B cell (primary cell): ENCODE measurements at regions of chr4 and their contacts with region 1.

Region 1: GRCh38 chr4:48085821-48086607 is 48.0 kb downstream of the TXK start:
- DNase-seq: no peak
- ATAC-seq: no peak
- H3K4me3 ChIP-seq: no peak overlapping the region
- H3K4me3 Mint-ChIP-seq: no peak overlapping the region
- H3K27ac ChIP-seq: no peak overlapping the region
- H3K27ac Mint-ChIP-seq: no peak overlapping the region
- H3K4me1 ChIP-seq: no peaks in the 10 kb centered on the region
- H3K4me1 Mint-ChIP-seq: no peaks in the 10 kb centered on the region
- H3K27me3 ChIP-seq: no peaks in the 10 kb centered on the region
- H3K27me3 Mint-ChIP-seq: peaks cover 15% of the 10 kb centered on the region
- CTCF ChIP-seq: no peak

Region 2: DNA sequence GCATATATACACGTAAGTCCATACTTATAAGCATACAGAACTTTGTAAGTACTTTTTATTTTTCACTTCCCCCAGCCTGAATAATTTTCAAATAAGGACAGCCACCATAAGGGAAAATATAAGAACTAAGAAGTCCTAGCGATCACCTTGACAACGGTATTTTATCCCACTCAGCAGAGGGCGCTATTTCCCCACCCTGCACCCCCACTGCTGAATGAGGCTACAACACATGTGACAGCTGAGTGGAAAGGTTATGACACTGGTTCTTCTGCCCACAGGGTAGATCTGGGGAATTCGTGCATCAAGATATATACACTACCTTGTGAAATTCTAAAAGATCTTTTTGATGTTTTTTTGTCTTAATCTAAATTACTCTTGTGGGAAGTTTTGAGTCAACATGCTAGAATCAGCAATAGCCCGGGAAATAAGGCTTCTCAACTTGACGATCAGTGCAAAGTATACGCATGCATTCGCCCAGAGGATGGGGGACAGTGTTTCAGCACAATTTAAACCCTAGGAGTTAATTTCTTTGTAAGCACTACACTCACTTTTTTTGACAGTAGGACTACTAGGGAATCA is 399.6 kb before region 1 on chr4:
- CTCF ChIA-PET with region 1: interaction called, 4 read pairs
- POLR2A ChIA-PET with region 1: no interaction called
- intact Hi-C with region 1: loop called (anchors 5 kb)
- DNase-seq: peak; percentile 64
- ATAC-seq: peak; percentile 36
- H3K4me3 ChIP-seq: no peak overlapping the region
- H3K4me3 Mint-ChIP-seq: no peak overlapping the region
- H3K27ac ChIP-seq: no peak overlapping the region
- H3K27ac Mint-ChIP-seq: no peak overlapping the region
- H3K4me1 ChIP-seq: no peaks in the 10 kb centered on the region
- H3K4me1 Mint-ChIP-seq: no peaks in the 10 kb centered on the region
- H3K27me3 ChIP-seq: peaks cover 0 to 1% (median 0%) of the 10 kb centered on the region in 4 experiments
- H3K27me3 Mint-ChIP-seq: peaks cover 18% of the 10 kb centered on the region
- CTCF ChIP-seq: peak; percentile 76

Region 3: DNA sequence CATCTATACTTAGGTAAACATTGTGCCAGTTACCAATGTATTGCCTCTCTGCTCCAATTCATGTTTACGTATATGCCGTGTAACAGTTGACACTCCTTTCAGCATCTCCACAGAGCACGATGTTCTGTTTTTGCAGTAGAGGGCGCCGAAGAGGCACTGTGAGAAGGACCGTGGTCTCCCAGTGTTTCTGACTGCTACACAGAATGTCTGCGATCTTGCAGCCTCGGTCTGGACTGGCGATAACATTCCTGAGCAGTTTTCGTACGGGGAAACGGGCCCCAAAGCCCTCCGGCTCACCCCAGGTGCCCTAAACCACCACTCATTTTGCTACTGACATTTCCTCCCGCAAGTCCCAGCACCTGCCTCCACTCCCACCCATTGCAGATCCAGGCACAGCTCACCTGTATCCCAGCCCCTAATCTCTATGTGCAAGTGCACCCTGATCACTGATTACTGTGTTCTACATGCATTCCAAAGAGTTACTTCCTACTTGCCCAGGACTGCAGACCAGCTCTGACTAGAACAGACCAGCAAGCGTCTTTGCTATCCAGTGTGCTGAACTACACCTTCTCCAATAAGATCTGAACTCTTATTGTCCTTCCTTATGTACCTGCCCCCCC is 159.3 kb before region 1 on chr4:
- CTCF ChIA-PET with region 1: interaction called, 4 read pairs
- POLR2A ChIA-PET with region 1: no interaction called
- intact Hi-C with region 1: loop called (anchors 1 kb)
- DNase-seq: peak; percentile 61
- ATAC-seq: peak; percentile 77
- H3K4me3 ChIP-seq: no peak overlapping the region
- H3K4me3 Mint-ChIP-seq: peak overlapping the region; percentile 40
- H3K27ac ChIP-seq: no peak overlapping the region
- H3K27ac Mint-ChIP-seq: no peak overlapping the region
- H3K4me1 ChIP-seq: peaks cover 6 to 14% of the 10 kb centered on the region in 2 donors
- H3K4me1 Mint-ChIP-seq: peaks cover 22% of the 10 kb centered on the region
- H3K27me3 ChIP-seq: peaks cover 0 to 6% (median 1%) of the 10 kb centered on the region in 4 experiments
- H3K27me3 Mint-ChIP-seq: peaks cover 13% of the 10 kb centered on the region
- CTCF ChIP-seq: peak; percentile 77

Region 4: DNA sequence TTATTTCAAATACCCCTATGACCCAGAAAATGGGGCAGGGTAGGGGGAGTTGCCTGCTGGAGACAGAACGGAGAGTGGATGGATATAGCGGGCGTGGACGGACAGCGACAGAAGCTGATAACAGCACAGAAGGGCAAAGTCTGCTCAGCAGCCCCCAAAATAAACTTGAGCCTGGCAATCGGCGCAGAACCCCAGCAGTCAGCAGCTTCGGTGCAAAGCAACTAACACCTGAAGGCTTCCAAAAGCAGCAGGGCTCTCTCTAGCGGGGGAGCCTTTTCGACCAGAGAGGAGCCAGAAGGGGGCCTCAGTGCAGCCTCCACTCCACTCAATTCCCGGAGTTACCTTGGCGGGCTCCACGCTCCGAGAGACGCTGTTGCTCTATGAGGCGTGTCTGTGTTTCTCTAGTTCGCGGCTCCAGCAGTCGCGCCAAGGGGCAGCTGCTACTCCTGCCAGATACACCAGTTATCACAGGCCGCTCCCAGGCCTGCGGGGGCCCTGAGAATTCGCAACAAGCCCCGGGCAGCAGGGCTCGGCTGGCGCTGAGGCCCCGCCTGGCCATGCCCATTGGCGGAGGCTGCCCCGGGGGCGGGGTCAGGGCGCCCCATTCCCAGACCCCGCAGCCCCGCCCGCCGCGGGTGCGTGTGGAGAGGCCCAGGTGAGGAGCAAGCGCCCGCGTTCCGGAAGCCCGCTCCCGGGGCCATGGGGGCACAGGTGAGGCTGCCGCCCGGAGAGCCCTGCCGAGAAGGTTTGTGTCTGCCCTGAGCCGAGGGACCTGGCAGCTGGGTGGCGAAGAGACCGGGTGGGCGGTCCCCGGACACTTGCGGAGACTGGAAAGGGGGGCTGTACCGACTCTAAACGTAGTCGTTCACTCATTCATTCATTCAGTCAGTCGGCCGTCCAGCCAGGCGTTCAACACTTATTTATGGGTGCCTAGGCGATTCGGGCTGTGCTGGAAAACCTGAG is 69.6 kb before region 1 on chr4 and contains the starts of genes CNGA1 and NIPAL1:
- CTCF ChIA-PET with region 1: interaction called, 17 read pairs
- POLR2A ChIA-PET with region 1: no interaction called
- intact Hi-C with region 1: loop called (anchors 5 kb)
- DNase-seq: peak; percentile 71
- ATAC-seq: peak; percentile 92
- H3K4me3 ChIP-seq: peak within 1 kb of the TSS; percentile 41 to 80 (median 66)
- H3K4me3 Mint-ChIP-seq: peak within 1 kb of the TSS; percentile 89
- H3K27ac ChIP-seq: no peak within 1 kb of the TSS
- H3K27ac Mint-ChIP-seq: peak within 1 kb of the TSS; percentile 50
- H3K4me1 ChIP-seq: peaks cover 15 to 18% of the 10 kb centered on the region in 2 donors
- H3K4me1 Mint-ChIP-seq: peaks cover 15% of the 10 kb centered on the region
- H3K27me3 ChIP-seq: peaks cover 2 to 49% (median 28%) of the 10 kb centered on the region in 4 experiments
- H3K27me3 Mint-ChIP-seq: peaks cover 45% of the 10 kb centered on the region
- CTCF ChIP-seq: peak; percentile 15
- total RNA-seq, gene CNGA1: not detected in 2 replicates
- total RNA-seq, gene NIPAL1: 1.1 TPM in 1 of 2 replicates, not detected in the other

Region 5: GRCh38 chr4:48047421-48047844 is 38.6 kb before region 1 on chr4:
- CTCF ChIA-PET with region 1: interaction called, 66 read pairs
- POLR2A ChIA-PET with region 1: no interaction called
- intact Hi-C with region 1: no loop called
- DNase-seq: peak; percentile 87
- ATAC-seq: peak; percentile 95
- H3K4me3 ChIP-seq: peak overlapping the region in 2 of 5 experiments; percentile 8 to 31
- H3K4me3 Mint-ChIP-seq: peak overlapping the region; percentile 57
- H3K27ac ChIP-seq: no peak overlapping the region
- H3K27ac Mint-ChIP-seq: peak overlapping the region; percentile 17
- H3K4me1 ChIP-seq: peaks cover 58 to 60% of the 10 kb centered on the region in 2 donors
- H3K4me1 Mint-ChIP-seq: peaks cover 59% of the 10 kb centered on the region
- H3K27me3 ChIP-seq: peaks cover 0 to 41% (median 19%) of the 10 kb centered on the region in 4 experiments
- H3K27me3 Mint-ChIP-seq: peaks cover 49% of the 10 kb centered on the region
- CTCF ChIP-seq: no peak

Region 6: DNA sequence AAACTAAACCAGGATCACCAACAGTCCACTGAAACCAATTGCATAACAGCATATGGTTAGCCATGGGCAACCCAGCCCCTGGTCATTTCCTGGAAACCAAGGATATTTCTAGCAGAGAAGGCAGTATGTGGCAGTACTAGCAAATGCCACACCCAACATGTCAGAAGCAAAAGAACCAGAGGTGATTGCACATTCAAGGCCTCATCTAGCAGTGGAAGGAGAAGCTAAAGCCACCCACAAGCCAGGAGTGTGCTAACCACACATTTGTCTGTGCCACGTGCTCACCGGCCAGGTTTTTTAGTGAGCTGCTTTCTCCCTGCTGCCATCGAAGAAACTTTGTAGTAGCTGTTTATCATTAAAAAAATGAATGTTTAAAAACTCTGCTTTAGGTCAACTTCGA is 141.6 kb after region 1 on chr4:
- CTCF ChIA-PET with region 1: no interaction called
- POLR2A ChIA-PET with region 1: no interaction called
- intact Hi-C with region 1: no loop called
- DNase-seq: no peak
- ATAC-seq: no peak
- H3K4me3 ChIP-seq: no peak overlapping the region
- H3K4me3 Mint-ChIP-seq: no peak overlapping the region
- H3K27ac ChIP-seq: no peak overlapping the region
- H3K27ac Mint-ChIP-seq: no peak overlapping the region
- H3K4me1 ChIP-seq: peaks cover 0 to 4% of the 10 kb centered on the region in 2 donors
- H3K4me1 Mint-ChIP-seq: peaks cover 15% of the 10 kb centered on the region
- H3K27me3 ChIP-seq: no peaks in the 10 kb centered on the region
- H3K27me3 Mint-ChIP-seq: no peaks in the 10 kb centered on the region
- CTCF ChIP-seq: no peak

Region 7: GRCh38 chr4:48247142-48247877 is 161.3 kb after region 1 on chr4:
- CTCF ChIA-PET with region 1: no interaction called
- POLR2A ChIA-PET with region 1: no interaction called
- intact Hi-C with region 1: no loop called
- DNase-seq: no peak
- ATAC-seq: peak; percentile 31
- H3K4me3 ChIP-seq: no peak overlapping the region
- H3K4me3 Mint-ChIP-seq: no peak overlapping the region
- H3K27ac ChIP-seq: no peak overlapping the region
- H3K27ac Mint-ChIP-seq: peak overlapping the region; percentile 17
- H3K4me1 ChIP-seq: no peaks in the 10 kb centered on the region
- H3K4me1 Mint-ChIP-seq: peaks cover 27% of the 10 kb centered on the region
- H3K27me3 ChIP-seq: no peaks in the 10 kb centered on the region
- H3K27me3 Mint-ChIP-seq: no peaks in the 10 kb centered on the region
- CTCF ChIP-seq: no peak